ENCODE measurements at regions of chr18 and their contacts with region 1.

Region 1: DNA sequence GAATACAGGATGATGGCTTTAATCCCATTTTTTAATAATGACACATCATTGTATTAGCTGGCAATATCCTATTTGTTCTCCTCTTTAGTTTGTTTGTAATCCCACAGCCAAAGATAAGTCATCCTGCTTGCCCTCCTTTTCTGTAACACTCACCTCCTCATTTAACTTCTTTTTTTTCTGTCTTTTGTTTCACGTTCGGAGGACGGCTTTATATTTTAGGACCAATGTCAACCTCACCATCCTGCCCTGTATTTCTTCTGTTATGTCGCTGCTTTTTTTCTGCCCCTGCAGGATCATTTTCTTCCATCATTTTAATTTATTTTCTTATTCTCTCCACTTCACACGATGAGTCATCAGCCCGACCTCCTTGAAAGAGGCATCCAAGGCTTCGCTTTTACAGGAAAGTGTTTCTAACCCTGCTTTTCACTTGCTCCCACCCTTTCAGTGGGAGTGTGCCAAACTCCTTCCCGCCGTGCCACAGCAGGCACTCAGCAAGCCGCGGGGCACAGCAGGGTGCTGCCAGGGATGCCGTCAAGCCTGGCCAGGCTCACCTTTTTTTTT is 11.4 kb downstream of the RAB31 start:
- DNase-seq: peak; percentile 80
- ATAC-seq: peak; percentile 80
- H3K4me3 ChIP-seq: peak overlapping the region; percentile 21 to 37; a peak in 3 of 4 replicates
- H3K27ac ChIP-seq: peak overlapping the region; percentile 64
- H3K4me1 ChIP-seq: peaks cover 31 to 42% of the 10 kb centered on the region in 2 experiments
- H3K27me3 ChIP-seq: no peaks in the 10 kb centered on the region
- CTCF ChIP-seq: no peak
- POLR2A ChIP-seq: no peak
- RAD21 ChIP-seq: peak; percentile 23

Region 2: DNA sequence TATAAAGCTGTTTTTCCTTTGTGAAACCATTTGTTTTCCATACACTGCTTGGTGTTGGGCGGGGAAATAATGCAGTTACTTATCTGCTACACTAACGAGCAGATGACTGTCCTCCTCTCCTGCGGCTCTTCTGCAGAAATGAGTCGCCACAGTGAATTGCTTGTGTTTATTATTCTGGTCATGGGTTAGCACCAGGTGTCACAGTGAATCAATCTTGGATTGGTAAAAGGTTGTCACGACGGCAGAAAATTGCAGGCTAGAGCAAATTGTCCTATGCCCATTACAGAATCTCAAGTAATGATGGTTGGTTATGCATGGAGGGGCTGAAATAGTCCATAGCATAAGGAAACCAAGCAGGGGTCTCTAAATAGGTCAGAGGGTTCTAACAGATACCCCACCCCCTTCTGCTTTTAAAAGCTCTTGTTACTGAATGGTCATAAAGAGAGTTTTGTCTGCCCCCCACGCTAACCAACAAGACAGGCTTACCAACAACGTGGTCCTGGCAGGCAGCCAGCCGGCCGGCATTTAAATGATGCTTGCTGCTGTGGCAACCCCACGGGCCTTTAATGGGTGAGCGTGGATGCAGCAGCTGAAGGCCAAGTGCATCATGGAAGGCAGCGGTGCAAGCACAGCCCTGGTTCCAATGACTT is 18.1 kb after region 1 on chr18:
- CTCF ChIA-PET with region 1: no interaction called
- POLR2A ChIA-PET with region 1: no interaction called
- RAD21 ChIA-PET with region 1: interaction called in 1 of 2 experiments, 3 read pairs
- intact Hi-C with region 1: loop called (anchors 1 kb)
- DNase-seq: no peak
- ATAC-seq: peak; percentile 65
- H3K4me3 ChIP-seq: peak overlapping the region in 1 of 2 experiments; percentile 25; a peak in 2 of 4 replicates
- H3K27ac ChIP-seq: no peak overlapping the region
- H3K4me1 ChIP-seq: peaks cover 46 to 65% of the 10 kb centered on the region in 2 experiments
- H3K27me3 ChIP-seq: peaks cover 15% of the 10 kb centered on the region; the same call in 1 of the 2 replicates
- CTCF ChIP-seq: no peak
- POLR2A ChIP-seq: no peak
- RAD21 ChIP-seq: no peak

Measured in HCT116 (cell line).